ENCODE measurements at regions of chr1 and their contacts with region 1.

Region 1: GRCh38 chr1:160726498-160727315 is 12.3 kb upstream of the SLAMF7 start:
- DNase-seq: peak; percentile 93
- ATAC-seq: peak; percentile 90
- H3K4me3 ChIP-seq: no peak overlapping the region
- H3K27ac ChIP-seq: peak overlapping the region; percentile 69
- H3K4me1 ChIP-seq: peaks cover 18% of the 10 kb centered on the region
- H3K27me3 ChIP-seq: peaks cover 5% of the 10 kb centered on the region; the same call in 1 of the 2 replicates
- CTCF ChIP-seq: peak; percentile 99

Region 2: GRCh38 chr1:160675641-160676410 is 50.9 kb before region 1 on chr1:
- CTCF ChIA-PET with region 1: no interaction called
- POLR2A ChIA-PET with region 1: no interaction called
- intact Hi-C with region 1: loop called (anchors 5 kb)
- DNase-seq: peak; percentile 78
- ATAC-seq: peak; percentile 99
- H3K4me3 ChIP-seq: no peak overlapping the region
- H3K27ac ChIP-seq: no peak overlapping the region
- H3K4me1 ChIP-seq: no peaks in the 10 kb centered on the region
- H3K27me3 ChIP-seq: peaks cover 60% of the 10 kb centered on the region
- CTCF ChIP-seq: peak; percentile 95

Region 3: DNA sequence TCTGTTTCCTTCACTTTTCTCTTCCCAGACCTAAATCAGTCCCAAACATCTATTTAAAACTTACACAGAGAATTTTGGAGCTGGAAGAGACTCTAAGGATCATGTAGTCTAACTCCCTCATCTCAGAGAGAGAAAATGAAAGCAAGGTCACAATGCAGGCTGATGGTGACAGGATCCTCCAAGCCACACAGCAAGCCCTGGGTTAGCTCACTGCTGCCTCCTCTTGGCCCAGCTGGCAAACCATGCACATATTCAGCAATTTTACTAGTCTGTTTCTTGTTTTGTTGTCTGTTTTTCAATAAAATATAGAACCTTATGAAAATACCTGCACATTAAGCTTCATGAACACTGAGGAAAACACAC is 41.6 kb after region 1 on chr1:
- CTCF ChIA-PET with region 1: interaction called, 4 read pairs
- POLR2A ChIA-PET with region 1: no interaction called
- intact Hi-C with region 1: loop called (anchors 5 kb)
- DNase-seq: peak; percentile 61
- ATAC-seq: peak; percentile 67
- H3K4me3 ChIP-seq: no peak overlapping the region; the same call in 1 of the 2 replicates
- H3K27ac ChIP-seq: no peak overlapping the region
- H3K4me1 ChIP-seq: no peaks in the 10 kb centered on the region; the same call in 1 of the 2 replicates
- H3K27me3 ChIP-seq: no peaks in the 10 kb centered on the region
- CTCF ChIP-seq: peak; percentile 75

Region 4: GRCh38 chr1:160779626-160780397 is 53.1 kb after region 1 on chr1:
- CTCF ChIA-PET with region 1: no interaction called
- POLR2A ChIA-PET with region 1: no interaction called
- intact Hi-C with region 1: no loop called
- DNase-seq: peak; percentile 53
- ATAC-seq: peak; percentile 57
- H3K4me3 ChIP-seq: no peak overlapping the region
- H3K27ac ChIP-seq: no peak overlapping the region
- H3K4me1 ChIP-seq: peaks cover 24% of the 10 kb centered on the region
- H3K27me3 ChIP-seq: no peaks in the 10 kb centered on the region
- CTCF ChIP-seq: peak; percentile 79

Region 5: GRCh38 chr1:160830321-160831153 is 103.8 kb after region 1 on chr1:
- CTCF ChIA-PET with region 1: interaction called, 6 read pairs
- POLR2A ChIA-PET with region 1: no interaction called
- intact Hi-C with region 1: loop called (anchors 1 kb)
- DNase-seq: peak; percentile 93
- ATAC-seq: peak; percentile 60
- H3K4me3 ChIP-seq: no peak overlapping the region
- H3K27ac ChIP-seq: no peak overlapping the region
- H3K4me1 ChIP-seq: peaks cover 43% of the 10 kb centered on the region
- H3K27me3 ChIP-seq: no peaks in the 10 kb centered on the region
- CTCF ChIP-seq: peak; percentile 98